Upper lobe of right lung (tissue), 1 donor: ENCODE measurements at regions of chr6 and their contacts with region 1.

Region 1: DNA sequence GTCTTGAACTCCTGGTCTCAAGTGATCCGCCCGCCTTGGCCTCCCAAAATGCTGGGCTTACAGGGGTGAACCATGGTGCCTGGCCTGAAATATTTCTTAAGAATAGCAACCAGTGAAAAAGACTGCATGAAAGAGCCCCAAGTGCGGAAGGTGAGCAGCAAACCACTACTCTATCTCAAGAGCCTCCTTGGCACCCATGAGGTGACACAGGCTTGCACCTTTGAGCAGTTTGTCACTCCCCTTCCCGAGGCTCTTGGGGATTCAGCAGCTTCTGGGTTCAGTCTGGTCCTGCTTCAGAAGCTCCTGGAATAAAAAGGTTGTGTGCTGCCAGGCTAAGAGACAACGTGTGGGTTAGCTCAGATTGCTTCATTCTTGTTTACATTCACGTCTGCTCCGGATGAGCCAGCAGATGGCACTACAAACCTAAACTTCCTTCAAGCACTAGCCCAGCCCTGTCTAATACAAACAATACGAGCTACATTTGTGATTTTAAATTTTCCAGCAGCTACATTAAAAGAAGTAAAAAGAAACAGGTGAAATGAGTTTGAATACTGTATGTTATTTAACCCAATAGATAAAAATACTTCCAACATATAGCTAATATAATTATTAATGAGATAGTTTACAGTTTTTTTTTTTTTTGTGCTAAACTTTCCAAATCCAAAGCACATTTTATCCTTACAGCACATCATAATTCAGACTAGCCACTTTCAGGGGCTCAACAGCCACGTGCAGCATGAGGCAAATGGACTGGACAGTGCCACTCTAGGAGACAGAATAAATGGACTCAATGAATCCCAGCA is 46.2 kb downstream of the GJA10 start:
- DNase-seq: no peak
- ATAC-seq: peak; percentile 92
- H3K4me3 ChIP-seq: no peak overlapping the region
- H3K27ac ChIP-seq: no peak overlapping the region
- H3K4me1 ChIP-seq: peaks cover 13% of the 10 kb centered on the region
- H3K27me3 ChIP-seq: no peaks in the 10 kb centered on the region
- CTCF ChIP-seq: peak; percentile 74

Region 2: GRCh38 chr6:89909991-89910390 is 30.4 kb before region 1 on chr6:
- intact Hi-C with region 1: no loop called
- DNase-seq: no peak
- ATAC-seq: no peak
- H3K4me3 ChIP-seq: no peak overlapping the region
- H3K27ac ChIP-seq: no peak overlapping the region
- H3K4me1 ChIP-seq: no peaks in the 10 kb centered on the region
- H3K27me3 ChIP-seq: no peaks in the 10 kb centered on the region
- CTCF ChIP-seq: no peak

Region 3: DNA sequence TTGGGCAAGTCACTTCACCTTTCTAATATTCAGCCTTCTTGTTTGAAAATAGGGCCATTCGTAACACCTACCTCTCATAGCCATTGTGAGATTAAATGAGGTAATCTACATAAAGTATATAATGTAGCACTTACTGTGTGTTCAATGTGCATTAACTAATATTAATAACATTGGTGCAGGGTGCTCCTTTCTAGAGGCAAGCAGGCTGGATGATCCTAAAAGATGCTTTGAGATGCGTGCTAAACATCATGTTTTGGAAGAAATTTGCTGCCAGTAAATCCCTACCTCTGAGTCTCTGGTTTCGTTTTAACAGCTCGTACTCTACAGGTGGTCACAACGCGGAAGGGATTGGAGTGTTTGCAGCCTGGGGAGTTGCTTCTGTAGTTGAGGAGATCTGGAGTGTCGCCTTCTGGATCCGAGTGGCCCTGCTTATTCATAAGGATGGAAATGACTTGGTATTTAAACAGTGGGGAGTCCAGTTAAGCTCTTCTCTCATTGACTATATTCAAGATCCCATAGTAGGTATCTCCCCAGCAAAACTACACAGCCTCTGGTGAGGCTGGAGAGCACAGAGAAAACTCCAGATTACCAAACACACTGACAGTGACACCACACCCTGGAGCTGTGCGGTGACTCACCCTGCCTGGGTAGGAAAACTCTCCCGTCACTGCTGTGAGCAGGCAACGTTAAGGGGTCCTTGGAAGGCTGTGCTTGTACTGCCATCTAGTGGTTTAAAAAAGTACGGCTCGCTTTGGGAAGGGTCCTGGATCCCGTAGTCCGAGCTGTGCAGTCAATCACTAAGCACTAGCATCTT is 538.6 kb after region 1 on chr6:
- intact Hi-C with region 1: loop called (anchors 10 kb)
- DNase-seq: peak; percentile 84
- ATAC-seq: peak; percentile 99
- H3K4me3 ChIP-seq: no peak overlapping the region
- H3K27ac ChIP-seq: no peak overlapping the region
- H3K4me1 ChIP-seq: peaks cover 5% of the 10 kb centered on the region
- H3K27me3 ChIP-seq: no peaks in the 10 kb centered on the region
- CTCF ChIP-seq: peak; percentile 93